CD8-positive, alpha-beta T cell (primary cell): ENCODE measurements at regions of chr22 and their contacts with region 1.

Region 1: DNA sequence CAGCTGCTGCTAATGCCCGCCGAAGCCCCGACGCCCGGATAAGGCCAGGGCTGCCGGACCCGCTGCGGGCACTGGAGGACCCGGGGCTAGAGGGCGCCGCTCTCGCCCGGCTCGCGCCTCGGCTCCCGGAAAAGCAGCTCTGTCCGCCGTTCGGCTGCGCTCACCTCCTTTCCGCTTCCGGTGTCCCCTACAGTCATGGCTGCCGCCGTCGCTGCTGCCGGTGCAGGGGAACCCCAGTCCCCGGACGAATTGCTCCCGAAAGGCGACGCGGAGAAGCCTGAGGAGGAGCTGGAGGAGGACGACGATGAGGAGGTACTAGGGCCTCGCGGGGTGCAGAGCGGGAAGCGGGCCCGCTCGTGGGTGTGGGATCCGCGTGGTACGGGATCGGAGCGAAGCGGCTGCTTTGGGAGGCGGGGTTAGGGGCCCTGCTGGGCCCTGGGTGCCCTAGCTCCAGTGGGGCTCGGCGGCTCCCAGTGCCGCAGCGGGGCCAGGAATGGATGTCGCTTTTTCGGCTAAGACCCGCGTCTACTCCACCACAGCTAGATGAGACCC is at the start of gene TOMM22:
- DNase-seq: peak; percentile 60 to 92 (median 84)
- ATAC-seq: peak; percentile 92
- H3K4me3 ChIP-seq: peak within 1 kb of the TSS; percentile 92 to 95
- H3K4me3 Mint-ChIP-seq: peak within 1 kb of the TSS; percentile 99
- H3K27ac ChIP-seq: peak within 1 kb of the TSS; percentile 84 to 87
- H3K27ac Mint-ChIP-seq: peak within 1 kb of the TSS; percentile 99
- H3K4me1 ChIP-seq: peaks cover 13% of the 10 kb centered on the region
- H3K4me1 Mint-ChIP-seq: peaks cover 19% of the 10 kb centered on the region
- H3K27me3 ChIP-seq: no peaks in the 10 kb centered on the region
- H3K27me3 Mint-ChIP-seq: no peaks in the 10 kb centered on the region
- CTCF ChIP-seq: peak; percentile 37
- total RNA-seq, gene TOMM22: 75.2 to 75.4 TPM

Region 2: GRCh38 chr22:38656256-38657044 is 25.4 kb before region 1 on chr22 and contains the starts of genes CBY1 and FAM227A:
- CTCF ChIA-PET with region 1: no interaction called
- POLR2A ChIA-PET with region 1: interaction called, 16 read pairs
- intact Hi-C with region 1: loop called (anchors 1 kb)
- DNase-seq: peak; percentile 76 to 94 (median 87)
- ATAC-seq: peak; percentile 84
- H3K4me3 ChIP-seq: peak within 1 kb of the TSS; percentile 75 to 94
- H3K4me3 Mint-ChIP-seq: peak within 1 kb of the TSS; percentile 96
- H3K27ac ChIP-seq: peak within 1 kb of the TSS; percentile 94 to 96
- H3K27ac Mint-ChIP-seq: peak within 1 kb of the TSS; percentile 99
- H3K4me1 ChIP-seq: peaks cover 11% of the 10 kb centered on the region
- H3K4me1 Mint-ChIP-seq: peaks cover 30% of the 10 kb centered on the region
- H3K27me3 ChIP-seq: no peaks in the 10 kb centered on the region
- H3K27me3 Mint-ChIP-seq: no peaks in the 10 kb centered on the region
- CTCF ChIP-seq: no peak
- total RNA-seq, gene CBY1: 7.6 to 8.9 TPM
- total RNA-seq, gene FAM227A: 0.73 TPM in 1 of 2 experiments, not detected in the other

Region 3: DNA sequence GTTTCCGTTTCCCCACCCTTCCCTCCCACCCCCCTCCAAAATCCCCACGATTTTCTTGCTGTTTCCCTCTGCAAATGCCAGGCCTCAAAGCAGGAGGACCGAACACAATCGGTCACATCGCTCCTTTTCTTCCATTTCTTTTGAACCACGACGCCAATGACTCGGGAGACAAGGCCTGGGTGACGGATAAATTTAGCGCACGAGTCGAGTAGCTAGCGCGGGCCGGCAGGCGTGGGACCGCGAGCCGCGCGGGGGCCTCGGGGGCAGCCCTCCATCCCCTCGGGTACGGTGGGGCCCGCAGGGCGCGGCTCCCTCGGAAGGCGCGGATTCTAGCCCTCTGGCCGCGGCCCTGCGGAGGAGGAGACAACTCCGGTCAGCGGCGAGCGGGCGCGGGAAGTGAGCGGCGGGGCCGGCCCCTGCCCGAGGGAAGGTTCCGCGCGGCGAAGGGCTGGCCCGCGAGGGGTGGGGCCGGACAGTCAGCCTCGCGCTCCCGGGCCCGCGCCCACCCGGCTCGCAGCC is 18.5 kb after region 1 on chr22:
- CTCF ChIA-PET with region 1: interaction called, 9 read pairs
- POLR2A ChIA-PET with region 1: interaction called, 23 read pairs
- intact Hi-C with region 1: loop called (anchors 1 kb)
- DNase-seq: peak in 2 of 9 experiments; percentile 29 to 70
- ATAC-seq: no peak
- H3K4me3 ChIP-seq: peak overlapping the region; percentile 51 to 89
- H3K4me3 Mint-ChIP-seq: peak overlapping the region; percentile 98
- H3K27ac ChIP-seq: peak overlapping the region; percentile 89 to 96
- H3K27ac Mint-ChIP-seq: peak overlapping the region; percentile 100
- H3K4me1 ChIP-seq: peaks cover 58% of the 10 kb centered on the region
- H3K4me1 Mint-ChIP-seq: peaks cover 69% of the 10 kb centered on the region
- H3K27me3 ChIP-seq: no peaks in the 10 kb centered on the region
- H3K27me3 Mint-ChIP-seq: no peaks in the 10 kb centered on the region
- CTCF ChIP-seq: no peak

Region 4: GRCh38 chr22:39068033-39068791 is 386.4 kb after region 1 on chr22:
- CTCF ChIA-PET with region 1: no interaction called
- POLR2A ChIA-PET with region 1: no interaction called
- intact Hi-C with region 1: no loop called
- DNase-seq: no peak
- ATAC-seq: no peak
- H3K4me3 ChIP-seq: no peak overlapping the region
- H3K4me3 Mint-ChIP-seq: no peak overlapping the region
- H3K27ac ChIP-seq: no peak overlapping the region
- H3K27ac Mint-ChIP-seq: peak overlapping the region; percentile 13
- H3K4me1 ChIP-seq: peaks cover 14% of the 10 kb centered on the region
- H3K4me1 Mint-ChIP-seq: peaks cover 5% of the 10 kb centered on the region
- H3K27me3 ChIP-seq: no peaks in the 10 kb centered on the region
- H3K27me3 Mint-ChIP-seq: no peaks in the 10 kb centered on the region
- CTCF ChIP-seq: no peak